ENCODE measurements at regions of chr19 and their contacts with region 1.

Region 1: DNA sequence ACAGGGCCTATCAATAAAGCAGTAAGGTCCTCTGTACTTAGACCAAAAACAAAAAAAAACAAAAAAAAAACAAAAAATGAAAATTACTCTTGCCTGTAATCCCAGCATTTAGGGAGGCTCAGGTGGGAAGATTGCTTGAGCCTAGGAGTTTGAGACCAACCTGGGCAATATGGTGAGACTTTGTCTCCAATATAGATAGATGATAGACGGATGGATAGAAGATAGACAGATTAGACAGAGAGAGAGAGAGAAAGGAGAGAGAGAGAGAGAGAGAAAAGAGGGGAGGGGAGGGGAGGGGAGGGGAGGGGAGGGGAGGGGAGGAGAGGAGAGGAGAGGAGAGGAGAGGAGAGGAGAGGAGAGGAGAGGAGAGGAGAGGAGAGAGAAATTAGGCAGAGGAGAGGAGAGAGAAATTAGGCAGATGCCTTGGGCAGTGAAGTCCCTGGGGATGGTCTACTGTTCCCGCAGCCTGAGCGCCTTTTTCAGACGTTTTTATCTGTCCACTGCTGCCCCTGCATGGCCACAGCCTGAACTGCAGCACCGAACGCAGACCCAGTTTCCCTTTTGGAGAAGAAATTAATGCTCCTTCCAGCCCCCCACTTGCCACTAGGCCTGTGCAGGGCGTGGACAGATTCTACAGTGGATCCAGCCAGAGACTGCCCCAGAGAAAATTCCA is 9.8 kb upstream of the ZNF627 start:
- DNase-seq: peak; percentile 70 to 92 (median 78)
- H3K4me3 ChIP-seq: no peak overlapping the region
- H3K27ac ChIP-seq: no peak overlapping the region
- H3K4me1 ChIP-seq: no peaks in the 10 kb centered on the region
- H3K27me3 ChIP-seq: no peaks in the 10 kb centered on the region
- CTCF ChIP-seq: peak; percentile 74 to 93 (median 85)
- POLR2A ChIP-seq: no peak

Region 2: DNA sequence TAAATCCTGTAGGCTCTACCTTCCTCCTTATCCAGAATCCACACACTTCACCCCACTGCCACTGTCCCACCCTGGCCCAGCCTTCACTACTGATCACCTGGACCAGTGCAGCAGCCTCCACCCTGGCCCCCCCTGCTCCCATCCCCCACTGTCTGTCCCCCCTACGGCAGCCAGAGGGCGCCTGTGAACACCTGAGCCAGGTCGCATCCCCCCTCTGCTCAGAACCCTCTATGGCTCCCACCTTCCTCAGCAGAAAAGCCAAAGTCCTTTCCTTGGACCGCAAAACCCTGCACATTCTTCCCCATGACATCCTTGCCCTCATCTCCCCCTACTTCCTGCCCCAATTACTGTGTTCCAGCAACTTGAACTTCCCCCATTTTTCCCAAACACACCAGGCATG is 127.2 kb before region 1 on chr19:
- intact Hi-C with region 1: no loop called
- DNase-seq: no peak
- H3K4me3 ChIP-seq: no peak overlapping the region
- H3K27ac ChIP-seq: no peak overlapping the region
- H3K4me1 ChIP-seq: no peaks in the 10 kb centered on the region
- H3K27me3 ChIP-seq: no peaks in the 10 kb centered on the region
- CTCF ChIP-seq: peak in 2 of 6 experiments; percentile 23 to 25
- POLR2A ChIP-seq: no peak

Region 3: GRCh38 chr19:11535792-11536595 is 51.4 kb before region 1 on chr19:
- intact Hi-C with region 1: loop called in 1 of 2 experiments (anchors 5 kb)
- DNase-seq: peak; percentile 86 to 96 (median 93)
- H3K4me3 ChIP-seq: peak overlapping the region in 1 of 4 donors; percentile 49
- H3K27ac ChIP-seq: peak overlapping the region in 3 of 5 donors; percentile 58 to 80 (median 63)
- H3K4me1 ChIP-seq: peaks cover 6% of the 10 kb centered on the region in 2 donors
- H3K27me3 ChIP-seq: peaks cover 4% of the 10 kb centered on the region
- CTCF ChIP-seq: peak; percentile 55 to 93 (median 78)
- POLR2A ChIP-seq: peak; percentile 17 to 48

Region 4: GRCh38 chr19:11848594-11849469 is 261.4 kb after region 1 on chr19 and contains the start of gene ZNF439:
- intact Hi-C with region 1: no loop called
- DNase-seq: peak; percentile 86 to 97 (median 92)
- H3K4me3 ChIP-seq: peak within 1 kb of the TSS in 3 of 4 donors; percentile 50 to 71 (median 64)
- H3K27ac ChIP-seq: peak within 1 kb of the TSS in 2 of 5 donors; percentile 67 to 83
- H3K4me1 ChIP-seq: peaks cover 0 to 10% of the 10 kb centered on the region in 2 donors
- H3K27me3 ChIP-seq: no peaks in the 10 kb centered on the region
- CTCF ChIP-seq: no peak
- POLR2A ChIP-seq: peak in 1 of 2 donors; percentile 41
- total RNA-seq, gene ZNF439: 2.5 to 13.1 (median 5.7) TPM

Measured in adrenal gland (tissue), 19 donors.